Heart right ventricle (tissue), 16 donors: ENCODE measurements at regions of chr17 and their contacts with region 1.

Region 1: GRCh38 chr17:14300575-14301278 is at the start of gene HS3ST3B1:
- DNase-seq: peak; percentile 98 to 99
- ATAC-seq: peak; percentile 91 to 97 (median 93)
- H3K4me3 ChIP-seq: peak within 1 kb of the TSS; percentile 46 to 80 (median 66)
- H3K27ac ChIP-seq: peak within 1 kb of the TSS; percentile 31 to 90 (median 74)
- H3K4me1 ChIP-seq: peaks cover 7 to 81% (median 67%) of the 10 kb centered on the region in 9 donors
- H3K27me3 ChIP-seq: peaks cover 7 to 90% (median 80%) of the 10 kb centered on the region in 7 donors
- CTCF ChIP-seq: peak in 2 of 9 donors; percentile 7 to 25
- total RNA-seq, gene HS3ST3B1: 1.1 to 5.9 (median 2.3) TPM

Region 2: DNA sequence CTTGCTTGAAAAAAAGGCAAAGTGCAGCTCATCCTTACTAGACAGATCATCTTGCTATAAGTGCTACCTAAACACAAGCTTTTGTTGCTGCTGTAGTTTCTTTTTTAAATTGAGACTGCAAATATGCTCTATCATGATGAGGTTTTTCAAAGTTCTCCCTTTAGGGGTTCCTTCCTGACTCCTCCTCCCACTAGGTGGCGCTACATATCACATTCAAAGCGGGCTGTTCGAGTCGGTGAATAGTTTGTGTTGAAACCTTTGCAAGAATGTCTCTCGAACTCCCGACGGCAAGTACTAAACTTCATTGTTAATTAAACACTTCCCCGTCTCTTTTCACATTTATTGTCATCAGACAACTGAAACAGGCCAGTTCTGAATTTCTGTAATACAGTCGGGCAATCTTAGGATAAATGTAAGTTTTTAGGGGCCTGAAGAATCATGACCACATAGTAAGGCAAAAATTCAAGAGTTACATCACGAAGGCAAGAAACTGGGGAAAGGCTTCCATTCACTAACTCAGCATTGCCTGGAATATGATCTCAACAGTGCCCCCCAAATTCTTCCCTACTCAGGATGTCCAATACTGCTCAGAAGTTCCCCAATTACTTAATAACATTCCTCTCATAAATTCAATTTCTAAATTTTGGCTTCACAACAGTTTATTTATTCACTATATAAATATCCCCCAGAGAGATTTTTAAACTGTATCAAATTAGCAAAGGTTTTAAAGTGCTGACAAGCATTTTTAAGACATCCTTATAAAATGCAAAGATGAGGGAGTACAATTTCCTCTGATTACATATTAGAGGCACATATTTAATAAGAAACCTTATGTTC is 705.7 kb before region 1 on chr17:
- intact Hi-C with region 1: loop called (anchors 1 to 5 kb)
- DNase-seq: peak; percentile 33 to 84
- ATAC-seq: peak in 6 of 8 donors; percentile 53 to 80 (median 71)
- H3K4me3 ChIP-seq: no peak overlapping the region
- H3K27ac ChIP-seq: no peak overlapping the region
- H3K4me1 ChIP-seq: peaks cover 0 to 12% (median 0%) of the 10 kb centered on the region in 9 donors
- H3K27me3 ChIP-seq: peaks cover 0 to 30% (median 14%) of the 10 kb centered on the region in 7 donors
- CTCF ChIP-seq: peak; percentile 73 to 91 (median 89)

Region 3: DNA sequence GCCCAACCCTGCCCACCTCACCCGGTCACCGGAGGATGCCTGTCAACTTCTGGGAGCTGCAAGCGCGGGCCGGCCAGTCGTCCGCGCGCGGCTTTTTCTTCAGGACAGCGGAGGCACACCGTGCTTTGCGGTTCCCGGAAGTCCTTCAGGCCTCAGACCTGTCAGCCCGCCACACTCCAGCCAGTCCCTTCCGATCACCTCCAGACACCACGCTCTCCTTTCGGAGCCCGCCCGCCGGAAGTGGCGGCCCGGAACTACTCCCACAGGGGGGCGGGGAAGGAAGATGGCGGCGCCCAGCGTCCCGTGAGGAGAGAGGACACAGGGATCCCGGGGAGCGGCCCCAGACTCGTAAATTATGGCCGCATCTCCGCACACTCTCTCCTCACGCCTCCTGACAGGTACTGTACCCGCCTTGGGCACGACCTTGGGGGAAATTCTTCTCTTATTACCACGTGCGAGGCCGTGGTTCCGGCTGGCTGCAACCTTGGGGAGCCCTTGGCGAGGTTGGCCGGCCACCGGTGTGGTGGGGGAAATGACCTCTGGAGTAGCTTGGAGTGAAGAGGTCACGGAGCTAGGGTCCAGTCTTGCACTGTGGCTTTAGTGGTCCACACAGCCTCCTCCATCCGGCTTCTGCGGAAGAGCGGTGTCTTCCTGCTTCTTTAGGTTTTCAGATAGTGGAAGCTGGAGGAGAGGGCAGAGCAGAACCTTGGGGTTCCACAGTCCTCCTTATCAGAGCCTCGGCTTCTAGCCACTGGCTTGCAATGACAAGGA is 231.3 kb before region 1 on chr17 and contains the start of gene COX10:
- intact Hi-C with region 1: loop called in 8 of 10 experiments (anchors 2 to 10 kb)
- DNase-seq: peak; percentile 88 to 89
- ATAC-seq: peak; percentile 99 to 100 (median 99)
- H3K4me3 ChIP-seq: peak within 1 kb of the TSS; percentile 71 to 98 (median 93)
- H3K27ac ChIP-seq: peak within 1 kb of the TSS; percentile 80 to 95 (median 90)
- H3K4me1 ChIP-seq: peaks cover 0 to 37% (median 25%) of the 10 kb centered on the region in 9 donors
- H3K27me3 ChIP-seq: no peaks in the 10 kb centered on the region
- CTCF ChIP-seq: peak in 1 of 9 donors; percentile 13
- total RNA-seq, gene COX10: 40.5 to 73.1 (median 58.6) TPM

Region 4: DNA sequence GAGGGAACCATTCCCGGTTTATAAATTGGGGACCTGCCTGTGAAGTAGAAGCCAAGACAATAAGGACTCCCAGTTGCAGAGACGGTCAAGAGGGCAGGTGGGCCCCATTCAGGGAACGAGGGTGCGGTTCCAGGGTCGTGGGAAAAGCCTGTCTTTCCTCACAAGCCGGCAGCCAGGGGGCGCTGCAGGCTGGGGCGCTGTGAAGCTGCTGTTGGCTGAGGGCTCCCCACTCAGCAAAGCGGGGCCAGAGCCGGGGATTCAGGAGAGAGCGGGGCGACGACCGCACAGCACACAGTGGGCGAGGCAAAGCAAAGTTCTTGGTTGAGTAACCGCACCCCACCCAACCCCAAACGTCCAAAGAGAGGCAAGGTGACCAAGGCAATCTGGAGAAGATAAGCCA is 88.9 kb before region 1 on chr17:
- intact Hi-C with region 1: loop called in 3 of 10 experiments (anchors 5 to 10 kb)
- DNase-seq: peak in 1 of 2 donors; percentile 33
- ATAC-seq: peak in 3 of 8 donors; percentile 29 to 42 (median 38)
- H3K4me3 ChIP-seq: no peak overlapping the region
- H3K27ac ChIP-seq: no peak overlapping the region
- H3K4me1 ChIP-seq: peaks cover 0 to 4% (median 0%) of the 10 kb centered on the region in 9 donors
- H3K27me3 ChIP-seq: no peaks in the 10 kb centered on the region
- CTCF ChIP-seq: peak; percentile 16 to 63 (median 48)

Region 5: DNA sequence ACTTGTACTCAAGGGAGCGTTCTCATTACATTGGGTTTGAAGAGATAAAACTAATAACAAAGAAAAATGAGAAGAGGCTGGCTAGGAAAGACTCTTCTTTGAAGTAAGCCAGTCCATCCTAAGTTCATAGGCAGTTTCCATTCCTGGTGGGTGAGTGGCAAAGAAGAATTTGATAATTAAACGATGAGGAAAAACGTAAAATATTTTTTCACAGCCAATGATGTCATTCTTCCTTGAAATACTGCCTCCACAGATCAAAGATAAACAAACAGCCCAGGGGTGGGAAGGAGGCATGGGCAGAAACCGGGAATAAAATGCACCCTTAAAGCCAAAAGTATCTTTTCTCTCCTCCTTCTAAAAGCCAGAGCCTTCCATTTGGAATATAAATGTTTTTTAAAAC is 617.8 kb after region 1 on chr17:
- intact Hi-C with region 1: no loop called
- DNase-seq: no peak
- ATAC-seq: no peak
- H3K4me3 ChIP-seq: no peak overlapping the region
- H3K27ac ChIP-seq: no peak overlapping the region
- H3K4me1 ChIP-seq: no peaks in the 10 kb centered on the region
- H3K27me3 ChIP-seq: peaks cover 0 to 4% (median 0%) of the 10 kb centered on the region in 7 donors
- CTCF ChIP-seq: no peak

Region 6: GRCh38 chr17:15171167-15172047 is 870.7 kb after region 1 on chr17:
- intact Hi-C with region 1: loop called in 1 of 10 experiments (anchors 10 kb)
- DNase-seq: peak; percentile 59 to 64
- ATAC-seq: peak; percentile 78 to 93 (median 82)
- H3K4me3 ChIP-seq: no peak overlapping the region
- H3K27ac ChIP-seq: no peak overlapping the region
- H3K4me1 ChIP-seq: peaks cover 0 to 3% (median 0%) of the 10 kb centered on the region in 9 donors
- H3K27me3 ChIP-seq: no peaks in the 10 kb centered on the region
- CTCF ChIP-seq: peak; percentile 60 to 83 (median 79)